Activated naive CD8-positive, alpha-beta T cell treated with anti-CD3 and anti-CD28 coated beads, Interleukin-2, amount 10 ng/mL, durations not matched to agents 7 days and 5 days (primary cell): ENCODE measurements at regions of chr2 and their contacts with region 1.

Region 1: GRCh38 chr2:58063641-58064040 is 17.0 kb downstream of the VRK2 start:
- DNase-seq: no peak
- ATAC-seq: no peak
- H3K4me3 Mint-ChIP-seq: peak overlapping the region; percentile 75
- H3K27ac Mint-ChIP-seq: peak overlapping the region; percentile 72
- H3K4me1 Mint-ChIP-seq: peaks cover 26% of the 10 kb centered on the region
- H3K27me3 Mint-ChIP-seq: no peaks in the 10 kb centered on the region

Region 2: GRCh38 chr2:58046585-58047372 is 16.9 kb before region 1 on chr2 and contains the start of gene VRK2:
- POLR2A ChIA-PET with region 1: interaction called, 12 read pairs
- DNase-seq: peak; percentile 89
- ATAC-seq: peak; percentile 93
- H3K4me3 Mint-ChIP-seq: peak within 1 kb of the TSS; percentile 85
- H3K27ac Mint-ChIP-seq: peak within 1 kb of the TSS; percentile 94
- H3K4me1 Mint-ChIP-seq: peaks cover 35% of the 10 kb centered on the region
- H3K27me3 Mint-ChIP-seq: no peaks in the 10 kb centered on the region
- total RNA-seq, gene VRK2: 21.5 to 22.8 TPM

Region 3: DNA sequence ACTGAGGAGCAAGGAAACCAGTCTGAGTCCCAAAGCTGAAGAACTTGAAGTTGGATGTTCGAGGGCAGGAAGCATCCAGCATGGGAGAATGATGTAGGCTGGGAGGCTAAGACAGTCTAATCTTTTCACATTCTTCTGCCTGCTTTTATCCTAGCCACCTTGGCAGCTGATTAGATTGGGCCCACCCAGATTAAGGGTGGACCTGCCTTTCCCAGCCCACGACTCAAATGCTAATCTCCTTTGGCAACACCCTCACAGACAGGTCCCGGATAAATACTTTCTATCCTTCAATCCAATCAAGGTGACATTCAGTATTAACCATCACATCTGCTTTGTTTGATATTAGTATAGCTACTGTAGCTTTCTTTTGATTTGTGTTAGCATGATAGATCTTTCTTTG is 10.1 kb after region 1 on chr2:
- POLR2A ChIA-PET with region 1: no interaction called
- DNase-seq: no peak
- ATAC-seq: no peak
- H3K4me3 Mint-ChIP-seq: no peak overlapping the region
- H3K27ac Mint-ChIP-seq: no peak overlapping the region
- H3K4me1 Mint-ChIP-seq: peaks cover 3% of the 10 kb centered on the region
- H3K27me3 Mint-ChIP-seq: no peaks in the 10 kb centered on the region

Region 4: DNA sequence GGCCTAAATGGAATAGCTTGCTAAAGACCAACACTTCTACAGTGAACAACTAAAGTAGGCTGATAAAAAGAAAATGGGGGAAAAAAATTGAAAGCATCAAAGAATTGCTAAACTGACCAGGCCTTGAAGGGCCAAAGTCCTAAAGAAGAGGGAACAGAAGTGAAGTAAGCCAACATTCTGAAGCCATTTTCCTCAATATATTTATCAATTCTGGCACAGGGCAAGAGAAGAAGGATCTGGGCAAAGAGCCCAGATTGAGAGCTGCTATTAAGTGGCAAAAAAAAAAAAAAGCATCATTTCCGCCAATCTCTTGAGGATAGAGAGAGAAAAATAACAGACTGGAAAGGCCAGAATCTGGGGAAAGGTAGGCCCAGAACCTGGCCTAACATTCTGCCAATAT is 151.8 kb after region 1 on chr2:
- POLR2A ChIA-PET with region 1: no interaction called
- DNase-seq: no peak
- ATAC-seq: no peak
- H3K4me3 Mint-ChIP-seq: no peak overlapping the region
- H3K27ac Mint-ChIP-seq: no peak overlapping the region
- H3K4me1 Mint-ChIP-seq: no peaks in the 10 kb centered on the region
- H3K27me3 Mint-ChIP-seq: no peaks in the 10 kb centered on the region